PC-9 (cell line): ENCODE measurements at regions of chr5 and their contacts with region 1.

Region 1: GRCh38 chr5:38994324-38994927 is 79.8 kb downstream of the RICTOR start:
- DNase-seq: peak; percentile 50 to 73
- H3K4me3 ChIP-seq: no peak overlapping the region
- H3K27ac ChIP-seq: no peak overlapping the region
- H3K4me1 ChIP-seq: no peaks in the 10 kb centered on the region
- H3K27me3 ChIP-seq: no peaks in the 10 kb centered on the region
- CTCF ChIP-seq: peak; percentile 80

Region 2: GRCh38 chr5:38948501-38948900 is 45.9 kb before region 1 on chr5:
- CTCF ChIA-PET with region 1: interaction called, 10 read pairs
- POLR2A ChIA-PET with region 1: no interaction called
- intact Hi-C with region 1: no loop called
- DNase-seq: no peak
- H3K4me3 ChIP-seq: no peak overlapping the region
- H3K27ac ChIP-seq: no peak overlapping the region
- H3K4me1 ChIP-seq: no peaks in the 10 kb centered on the region
- H3K27me3 ChIP-seq: no peaks in the 10 kb centered on the region
- CTCF ChIP-seq: no peak

Region 3: DNA sequence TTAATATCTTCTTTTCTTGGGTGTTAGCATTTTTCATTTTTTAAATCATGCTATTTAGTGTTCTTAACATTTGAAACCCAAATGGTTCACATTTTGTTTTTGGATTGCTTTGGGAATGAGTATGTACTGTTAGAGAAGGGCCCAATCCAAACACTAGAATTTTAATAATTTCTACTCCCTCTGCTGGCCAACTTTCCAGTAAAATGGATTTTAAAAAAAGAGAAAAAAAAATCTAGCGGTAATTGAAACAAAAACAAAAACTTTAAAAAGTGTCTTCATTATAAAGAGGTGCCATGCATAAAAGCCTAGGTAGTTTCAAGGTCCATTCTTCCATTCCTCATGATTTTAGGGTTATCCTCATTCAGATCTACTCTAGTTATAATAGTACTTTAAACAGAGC is 111.9 kb after region 1 on chr5:
- CTCF ChIA-PET with region 1: no interaction called
- POLR2A ChIA-PET with region 1: no interaction called
- intact Hi-C with region 1: loop called (anchors 1 kb)
- DNase-seq: no peak
- H3K4me3 ChIP-seq: no peak overlapping the region
- H3K27ac ChIP-seq: no peak overlapping the region
- H3K4me1 ChIP-seq: peaks cover 32% of the 10 kb centered on the region
- H3K27me3 ChIP-seq: no peaks in the 10 kb centered on the region
- CTCF ChIP-seq: peak; percentile 63

Region 4: DNA sequence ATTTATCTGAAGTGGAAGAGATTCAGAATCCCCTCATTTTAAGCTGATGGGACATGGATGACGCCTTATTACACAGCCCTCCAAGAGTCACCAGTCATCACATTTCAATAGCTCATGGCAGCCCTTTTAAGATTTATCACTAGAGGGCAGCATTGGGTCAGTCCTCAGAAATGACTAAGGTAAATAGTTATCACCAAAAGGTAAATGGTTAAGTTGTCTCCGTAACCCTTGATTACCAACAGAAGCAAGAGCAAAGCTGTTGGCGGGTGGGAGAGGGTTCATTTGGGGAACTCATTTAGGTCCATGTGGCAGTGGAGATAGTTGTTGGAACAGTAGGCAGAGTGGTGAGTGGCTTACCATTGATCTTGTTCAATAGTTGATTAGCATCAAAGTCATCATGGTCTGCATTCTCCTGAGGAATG is 381.9 kb after region 1 on chr5:
- CTCF ChIA-PET with region 1: no interaction called
- POLR2A ChIA-PET with region 1: no interaction called
- intact Hi-C with region 1: loop called (anchors 5 kb)
- DNase-seq: peak; percentile 63 to 66
- H3K4me3 ChIP-seq: no peak overlapping the region
- H3K27ac ChIP-seq: no peak overlapping the region
- H3K4me1 ChIP-seq: no peaks in the 10 kb centered on the region
- H3K27me3 ChIP-seq: no peaks in the 10 kb centered on the region
- CTCF ChIP-seq: peak; percentile 96